ENCODE measurements at regions of chr9 and their contacts with region 1.

Region 1: GRCh38 chr9:37390759-37391158 is 31.7 kb upstream of the GRHPR start:
- H3K4me3 ChIP-seq: no peak overlapping the region
- H3K27ac ChIP-seq: no peak overlapping the region
- H3K4me1 ChIP-seq: no peaks in the 10 kb centered on the region
- CTCF ChIP-seq: no peak

Region 2: DNA sequence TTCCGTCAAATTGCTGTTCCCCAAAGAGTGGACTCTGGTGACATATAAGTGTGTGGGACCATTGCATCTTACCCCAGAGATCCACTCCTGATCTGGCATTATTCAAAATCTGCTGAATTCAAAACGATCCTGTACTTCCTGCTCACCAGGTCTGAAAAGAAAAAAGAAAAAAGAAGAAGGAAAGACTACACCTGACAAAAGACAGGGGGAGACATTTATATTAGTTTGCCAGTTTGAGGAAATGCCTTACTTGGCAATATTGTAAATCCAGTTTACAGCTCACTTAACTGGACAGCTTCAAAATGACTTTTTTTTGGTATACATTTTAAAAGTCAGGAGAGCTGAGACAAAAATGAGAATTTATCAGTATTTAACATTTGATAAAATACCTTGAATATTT is 16.7 kb after region 1 on chr9:
- CTCF ChIA-PET with region 1: interaction called, 10 read pairs
- POLR2A ChIA-PET with region 1: no interaction called
- H3K4me3 ChIP-seq: no peak overlapping the region
- H3K27ac ChIP-seq: no peak overlapping the region
- H3K4me1 ChIP-seq: no peaks in the 10 kb centered on the region
- CTCF ChIP-seq: no peak

Measured in HEK293 (cell line).